ENCODE measurements at regions of chr18 and their contacts with region 1.

Region 1: DNA sequence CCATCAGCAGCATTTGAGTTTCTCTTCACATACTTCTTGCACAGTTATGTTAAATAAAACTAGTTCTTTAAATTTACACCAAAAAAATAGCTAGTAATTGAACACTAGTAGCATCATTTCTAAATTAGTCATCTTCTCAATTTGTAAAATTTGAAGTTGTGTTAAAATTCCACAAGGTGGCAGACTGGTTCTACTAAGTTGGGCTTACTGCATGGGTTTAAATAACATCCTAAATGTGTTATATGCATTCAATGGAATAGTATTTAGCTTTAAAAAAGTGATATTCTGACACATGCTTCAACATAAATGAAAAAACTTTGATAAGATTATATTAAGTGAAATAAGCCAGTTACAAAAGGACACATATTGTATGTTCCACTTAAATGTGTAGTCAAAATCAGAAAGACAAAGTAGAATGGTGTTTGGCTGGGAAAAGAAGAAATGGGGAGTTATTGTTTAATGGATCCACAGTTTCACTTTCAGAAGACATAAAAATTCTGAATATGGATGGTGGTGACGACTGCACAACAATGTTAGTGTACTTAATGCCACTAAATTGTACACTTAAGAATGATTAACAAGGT is 28.7 kb upstream of the RPRD1A start:
- DNase-seq: peak; percentile 54
- H3K4me3 ChIP-seq: no peak overlapping the region
- H3K27ac ChIP-seq: no peak overlapping the region
- H3K27me3 ChIP-seq: no peaks in the 10 kb centered on the region
- CTCF ChIP-seq: peak; percentile 55

Region 2: GRCh38 chr18:36015629-36016028 is 80.4 kb before region 1 on chr18:
- CTCF ChIA-PET with region 1: interaction called, 23 read pairs
- POLR2A ChIA-PET with region 1: no interaction called
- DNase-seq: no peak
- H3K4me3 ChIP-seq: no peak overlapping the region
- H3K27ac ChIP-seq: no peak overlapping the region
- H3K27me3 ChIP-seq: no peaks in the 10 kb centered on the region
- CTCF ChIP-seq: no peak

Region 3: DNA sequence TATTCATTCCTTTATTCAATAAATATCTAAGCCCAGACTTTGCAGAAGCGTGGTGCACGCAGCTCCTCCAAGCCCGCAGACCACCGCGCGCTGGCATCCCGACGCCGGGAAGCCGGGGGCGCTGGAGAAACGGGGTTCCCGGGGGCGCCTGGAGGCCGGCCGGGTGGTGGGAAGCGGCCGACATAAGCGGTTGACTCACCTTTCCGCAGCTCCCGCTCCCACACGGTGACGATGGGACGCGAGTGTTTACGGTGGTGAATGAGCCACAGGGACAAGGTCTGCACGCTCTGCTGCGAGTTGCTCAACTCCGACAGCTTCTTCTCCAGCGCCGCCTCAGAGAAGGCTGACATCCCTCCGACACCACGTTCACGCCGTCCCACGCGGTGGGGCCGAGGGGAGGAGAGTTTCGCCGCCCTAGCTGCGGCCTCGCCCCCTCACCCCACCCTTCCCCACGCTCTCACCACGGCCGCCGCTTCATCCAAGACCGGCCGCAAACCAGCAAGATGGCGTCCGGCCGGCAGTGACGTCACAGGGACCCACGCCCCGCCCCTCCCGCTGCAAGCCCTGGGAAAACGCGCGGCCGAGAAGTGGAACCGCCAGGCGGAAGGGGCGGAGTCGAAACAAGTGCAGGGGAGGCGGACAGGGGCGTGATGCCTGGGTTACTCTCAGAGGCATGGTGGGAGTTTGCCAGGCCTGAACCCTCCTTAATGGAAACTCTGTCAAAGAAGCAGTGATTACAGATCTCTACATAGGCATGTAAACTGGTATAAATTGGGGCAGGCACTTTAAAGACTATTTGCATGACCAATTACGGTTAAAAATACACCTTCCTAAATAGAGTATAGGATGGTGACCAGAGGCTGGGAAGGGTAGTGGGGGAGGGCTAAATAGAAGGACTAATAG is 28.7 kb before region 1 on chr18 and contains the start of gene RPRD1A:
- CTCF ChIA-PET with region 1: interaction called, 5 read pairs
- POLR2A ChIA-PET with region 1: interaction called, 10 read pairs
- DNase-seq: peak; percentile 84
- H3K4me3 ChIP-seq: peak within 1 kb of the TSS; percentile 88
- H3K27ac ChIP-seq: peak within 1 kb of the TSS; percentile 96
- H3K27me3 ChIP-seq: no peaks in the 10 kb centered on the region
- CTCF ChIP-seq: no peak
- polyA plus RNA-seq, gene RPRD1A: 25.7 and 35.6 TPM in 2 replicates